ENCODE measurements at regions of chr12 and their contacts with region 1.

Region 1: GRCh38 chr12:949453-950191 is at the start of gene RAD52:
- DNase-seq: peak; percentile 93 to 97 (median 96)
- ATAC-seq: peak; percentile 86 to 88
- H3K4me3 Mint-ChIP-seq: peak within 1 kb of the TSS; percentile 86 to 99 (median 97)
- H3K27ac Mint-ChIP-seq: peak within 1 kb of the TSS; percentile 87 to 99 (median 96)
- H3K4me1 Mint-ChIP-seq: peaks cover 19 to 30% (median 29%) of the 10 kb centered on the region in 4 donors
- H3K27me3 Mint-ChIP-seq: no peaks in the 10 kb centered on the region
- polyA plus RNA-seq, gene RAD52: 2.1 to 4.9 (median 3.4) TPM

Region 2: DNA sequence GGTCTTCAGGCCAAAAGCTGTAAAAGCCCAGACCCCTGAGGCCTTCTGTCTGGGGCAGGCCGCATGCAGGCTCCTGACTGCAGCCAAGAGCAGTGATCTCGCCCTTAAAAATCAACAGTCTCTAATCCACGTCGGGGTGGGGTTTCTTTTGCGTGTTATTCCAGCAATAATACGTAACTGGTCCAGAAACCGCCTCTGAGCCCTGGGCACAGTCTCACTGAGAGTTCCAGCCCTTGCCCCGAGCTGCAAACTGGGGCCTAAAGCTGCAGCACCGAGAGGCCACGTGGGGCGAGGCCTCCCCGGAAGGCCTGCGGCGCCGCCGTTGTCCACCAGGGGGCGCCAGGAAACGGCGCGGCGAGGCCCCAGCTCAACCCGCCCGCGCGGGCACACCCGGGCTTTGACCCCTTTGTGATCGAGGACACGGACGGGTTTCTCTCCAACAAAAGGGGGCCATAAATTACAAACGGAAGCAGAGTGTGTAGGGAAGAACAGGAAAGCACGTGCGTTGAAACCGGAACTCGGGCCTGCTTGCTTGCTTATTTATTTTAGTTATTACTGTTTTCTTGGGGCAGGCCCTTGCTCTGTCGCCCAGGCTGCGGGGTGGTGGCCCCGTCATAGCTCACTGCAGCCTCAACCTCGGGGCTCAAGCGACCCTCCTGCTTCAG is 373.5 kb before region 1 on chr12:
- POLR2A ChIA-PET with region 1: interaction called, 11 read pairs
- DNase-seq: peak; percentile 65 to 92 (median 84)
- ATAC-seq: peak; percentile 98 to 100
- H3K4me3 Mint-ChIP-seq: peak overlapping the region; percentile 30 to 67 (median 54)
- H3K27ac Mint-ChIP-seq: peak overlapping the region in 8 of 10 donors; percentile 51 to 92 (median 74)
- H3K4me1 Mint-ChIP-seq: peaks cover 4 to 25% (median 21%) of the 10 kb centered on the region in 4 donors
- H3K27me3 Mint-ChIP-seq: peaks cover 0 to 5% (median 0%) of the 10 kb centered on the region in 5 donors

Region 3: DNA sequence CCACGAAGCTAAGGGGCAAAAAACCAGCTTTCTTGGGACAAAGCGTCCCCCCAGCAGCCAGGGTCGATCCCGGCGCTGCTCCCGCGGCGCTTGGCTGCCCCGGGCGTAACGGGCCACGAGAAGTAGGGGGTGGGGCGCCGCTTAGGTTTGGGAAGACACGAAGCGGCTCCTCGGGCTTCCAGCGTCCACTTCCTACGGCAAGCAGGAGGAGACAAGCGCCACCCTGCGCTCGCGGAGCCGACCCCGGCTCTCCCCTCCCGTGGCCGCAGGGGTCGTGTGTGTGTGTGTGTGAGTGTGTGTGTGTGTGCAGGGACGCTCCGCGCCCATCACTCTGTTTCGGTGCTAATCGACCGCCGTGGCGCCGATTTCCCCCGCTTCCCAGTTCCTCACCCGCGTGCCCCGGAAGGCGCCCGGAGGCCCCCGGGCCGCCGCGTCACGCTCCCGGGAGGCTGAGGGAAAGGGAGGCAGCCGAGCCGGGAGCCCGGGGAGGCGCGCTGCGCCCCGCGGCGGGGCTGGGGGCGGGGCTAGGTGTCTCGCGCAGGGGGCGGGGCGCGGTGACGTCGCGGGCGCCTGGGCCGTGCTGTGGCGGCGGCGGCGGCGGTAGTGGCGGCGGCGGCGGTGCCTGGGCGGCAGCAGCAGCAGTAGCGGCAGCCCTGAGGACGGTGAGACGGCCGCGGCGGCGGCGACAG is 41.2 kb after region 1 on chr12 and contains the start of gene ERC1:
- POLR2A ChIA-PET with region 1: interaction called, 27 read pairs
- DNase-seq: peak; percentile 73 to 91 (median 88)
- ATAC-seq: peak; percentile 78 to 82
- H3K4me3 Mint-ChIP-seq: peak within 1 kb of the TSS; percentile 88 to 98 (median 96)
- H3K27ac Mint-ChIP-seq: peak within 1 kb of the TSS; percentile 92 to 99 (median 96)
- H3K4me1 Mint-ChIP-seq: peaks cover 30 to 51% (median 48%) of the 10 kb centered on the region in 4 donors
- H3K27me3 Mint-ChIP-seq: no peaks in the 10 kb centered on the region
- polyA plus RNA-seq, gene ERC1: 14.0 to 22.5 (median 14.3) TPM

Region 4: DNA sequence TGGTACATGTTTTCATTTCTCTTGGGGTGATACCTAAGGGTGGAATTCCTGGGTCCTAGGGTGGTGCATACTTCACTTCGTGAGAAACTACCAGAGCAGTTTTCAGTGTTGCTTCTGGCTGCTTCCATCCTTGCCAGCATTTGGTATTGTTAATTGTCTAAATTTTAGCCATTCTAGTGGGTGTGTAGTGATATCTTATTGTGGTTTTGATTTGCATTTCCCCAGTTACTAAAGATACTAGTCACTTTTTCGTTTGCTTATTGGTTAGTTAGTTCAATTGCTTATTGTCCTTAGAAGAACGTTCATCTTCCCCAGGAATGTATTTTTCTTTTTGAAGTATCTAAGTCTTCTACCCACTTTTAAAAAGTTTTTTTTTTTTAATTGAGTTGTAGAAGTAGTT is 121.6 kb after region 1 on chr12:
- POLR2A ChIA-PET with region 1: no interaction called
- DNase-seq: no peak
- ATAC-seq: no peak
- H3K4me3 Mint-ChIP-seq: no peak overlapping the region
- H3K27ac Mint-ChIP-seq: peak overlapping the region in 1 of 10 donors; percentile 70
- H3K4me1 Mint-ChIP-seq: peaks cover 8 to 13% (median 10%) of the 10 kb centered on the region in 4 donors
- H3K27me3 Mint-ChIP-seq: no peaks in the 10 kb centered on the region

Measured in naive thymus-derived CD8-positive, alpha-beta T cell (primary cell).